Right cardiac atrium (tissue), 5 donors: ENCODE measurements at regions of chr5 and their contacts with region 1.

Region 1: DNA sequence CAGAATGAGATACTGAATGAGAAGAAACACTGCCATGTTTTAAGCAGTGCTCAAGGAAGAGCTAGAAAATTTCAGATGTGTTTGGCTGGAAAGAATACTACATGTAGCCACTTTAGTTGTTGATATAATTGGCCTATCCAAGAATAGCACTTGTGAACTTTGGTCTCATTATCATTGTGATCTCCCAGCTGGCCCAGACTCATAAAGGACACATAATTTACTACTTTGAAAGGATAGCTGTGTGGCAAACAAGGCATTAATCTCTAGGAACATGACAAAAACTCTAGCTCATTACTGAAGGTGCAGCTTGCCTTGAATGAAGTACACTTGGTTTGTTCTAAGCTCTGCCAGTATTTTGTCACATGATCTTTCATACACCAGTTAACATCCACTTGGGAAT is 356.3 kb downstream of the CSNK1G3 start:
- DNase-seq: no peak
- ATAC-seq: no peak
- H3K4me3 ChIP-seq: no peak overlapping the region
- H3K27ac ChIP-seq: no peak overlapping the region
- H3K4me1 ChIP-seq: peaks cover 5% of the 10 kb centered on the region
- H3K27me3 ChIP-seq: no peaks in the 10 kb centered on the region

Region 2: DNA sequence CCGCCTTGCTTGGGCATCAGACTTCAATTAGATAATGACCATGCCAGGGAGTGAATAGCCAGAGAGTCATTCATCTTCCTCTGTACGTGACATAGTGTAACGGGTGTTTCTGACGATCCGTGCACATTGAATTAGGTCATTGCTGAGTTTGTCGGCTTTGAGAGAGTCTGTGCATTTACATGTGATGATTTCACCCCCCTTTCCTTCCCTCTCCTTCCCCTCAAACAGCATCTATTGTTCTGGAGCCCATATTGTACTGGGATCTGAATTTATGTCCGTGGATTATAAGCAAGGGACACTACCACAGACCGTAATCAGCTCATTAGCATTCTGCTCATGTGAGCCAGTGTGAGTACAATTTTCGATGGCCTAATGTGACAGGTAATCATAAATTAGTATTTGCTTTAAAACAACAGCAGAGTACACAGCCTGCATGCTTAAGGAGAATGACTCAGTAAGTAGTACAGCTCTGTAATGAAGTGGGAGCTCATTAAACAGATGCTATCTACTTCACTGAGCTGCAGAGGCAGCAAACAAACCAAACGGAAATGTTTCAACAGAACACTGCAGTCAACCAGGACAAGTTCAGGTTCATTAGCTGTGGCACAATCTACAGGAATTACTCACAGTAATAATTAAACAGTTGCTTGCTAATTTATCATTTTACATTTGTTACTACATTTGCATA is 54.2 kb before region 1 on chr5:
- intact Hi-C with region 1: loop called in 1 of 4 experiments (anchors 10 kb)
- DNase-seq: no peak
- ATAC-seq: peak; percentile 56 to 72
- H3K4me3 ChIP-seq: no peak overlapping the region
- H3K27ac ChIP-seq: peak overlapping the region; percentile 96
- H3K4me1 ChIP-seq: peaks cover 10% of the 10 kb centered on the region
- H3K27me3 ChIP-seq: no peaks in the 10 kb centered on the region